Activated CD4-positive, alpha-beta T cell treated with anti-CD3 and anti-CD28 coated beads for 36 hours (primary cell): ENCODE measurements at regions of chr20 and their contacts with region 1.

Region 1: DNA sequence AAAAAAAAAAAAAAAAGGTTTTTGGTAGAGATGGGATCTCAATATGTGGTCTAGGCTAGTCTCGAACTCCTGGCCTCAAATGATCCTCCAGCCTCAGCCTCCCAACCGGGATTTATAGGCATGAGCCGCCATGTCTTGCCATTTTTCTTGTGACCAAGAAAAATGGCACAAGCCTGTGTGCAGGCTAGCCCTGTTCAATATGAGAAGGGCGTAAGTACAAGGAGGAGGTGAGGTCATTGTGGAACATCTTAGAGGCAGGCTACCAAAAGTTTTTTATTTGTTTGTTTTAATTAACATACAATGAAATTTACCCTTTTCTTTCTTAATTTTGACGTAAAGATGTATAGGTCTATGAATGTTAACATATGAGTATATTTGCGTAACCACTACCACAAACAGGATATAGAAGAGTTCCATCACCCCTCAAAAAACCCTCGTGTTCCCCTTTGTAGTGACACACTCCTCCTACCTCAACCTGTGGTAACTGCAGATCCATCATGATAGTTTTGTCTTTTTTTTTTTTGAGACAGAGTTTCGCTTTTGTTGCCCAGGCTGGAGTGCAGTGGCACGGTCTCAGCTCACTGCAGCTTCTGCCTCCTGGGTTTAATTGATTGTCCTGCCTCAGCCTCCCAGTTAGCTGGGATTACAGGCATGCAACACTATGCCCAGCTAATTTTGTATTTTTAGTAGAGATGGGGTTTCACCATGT is 28.3 kb upstream of the KIF3B start:
- DNase-seq: peak; percentile 60
- ATAC-seq: peak; percentile 67
- H3K4me3 Mint-ChIP-seq: peak overlapping the region; percentile 28
- H3K27ac Mint-ChIP-seq: peak overlapping the region; percentile 84
- H3K4me1 Mint-ChIP-seq: peaks cover 75% of the 10 kb centered on the region
- H3K27me3 Mint-ChIP-seq: no peaks in the 10 kb centered on the region

Region 2: DNA sequence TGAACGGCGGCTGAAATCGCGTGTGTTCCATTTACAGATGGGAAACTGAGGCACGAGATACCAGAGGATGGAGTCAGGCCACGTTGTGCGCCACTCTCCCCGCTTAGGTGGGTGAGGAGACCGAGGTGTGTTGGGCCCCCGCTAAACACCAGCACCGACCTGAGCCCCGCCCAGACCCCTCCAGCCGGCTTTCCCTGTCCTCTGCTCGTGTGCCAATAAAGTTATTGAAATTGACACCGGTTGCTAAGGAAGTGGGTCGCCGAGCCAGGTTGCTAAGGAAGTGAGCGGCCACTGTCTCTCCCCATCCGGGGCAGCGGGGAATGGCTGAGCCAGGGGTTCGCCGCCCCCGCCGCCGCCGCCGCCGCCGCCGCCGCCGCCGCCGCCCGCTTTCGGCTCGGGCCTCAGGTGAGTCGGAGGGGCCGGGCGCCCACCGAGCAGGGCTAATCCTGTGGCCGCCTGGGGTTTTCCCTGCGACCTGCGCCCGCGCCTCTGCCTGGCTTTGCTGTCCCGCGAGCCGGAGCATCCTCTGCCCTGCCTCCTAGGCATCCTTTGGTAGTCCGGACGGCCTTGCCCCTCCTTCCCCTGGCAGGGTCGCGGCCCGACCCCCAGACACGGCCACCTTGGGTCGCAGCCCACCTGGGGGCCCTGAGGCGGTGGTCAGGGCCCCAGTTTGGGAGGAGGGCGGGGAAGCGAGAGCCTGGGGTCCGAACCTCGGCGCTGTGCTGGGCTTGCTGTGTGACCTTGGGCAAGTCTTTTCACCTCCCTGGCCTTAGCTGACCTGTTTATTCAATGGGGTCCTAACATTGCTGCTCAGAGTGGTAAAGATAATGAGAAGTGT is 28.4 kb after region 1 on chr20 and contains the start of gene KIF3B:
- CTCF ChIA-PET with region 1: no interaction called
- POLR2A ChIA-PET with region 1: interaction called, 3 read pairs
- intact Hi-C with region 1: loop called (anchors 1 kb)
- DNase-seq: peak; percentile 93
- ATAC-seq: peak; percentile 81
- H3K4me3 Mint-ChIP-seq: peak within 1 kb of the TSS; percentile 91
- H3K27ac Mint-ChIP-seq: peak within 1 kb of the TSS; percentile 98
- H3K4me1 Mint-ChIP-seq: peaks cover 58% of the 10 kb centered on the region
- H3K27me3 Mint-ChIP-seq: no peaks in the 10 kb centered on the region
- total RNA-seq, gene KIF3B: 39.9 to 40.7 TPM

Region 3: DNA sequence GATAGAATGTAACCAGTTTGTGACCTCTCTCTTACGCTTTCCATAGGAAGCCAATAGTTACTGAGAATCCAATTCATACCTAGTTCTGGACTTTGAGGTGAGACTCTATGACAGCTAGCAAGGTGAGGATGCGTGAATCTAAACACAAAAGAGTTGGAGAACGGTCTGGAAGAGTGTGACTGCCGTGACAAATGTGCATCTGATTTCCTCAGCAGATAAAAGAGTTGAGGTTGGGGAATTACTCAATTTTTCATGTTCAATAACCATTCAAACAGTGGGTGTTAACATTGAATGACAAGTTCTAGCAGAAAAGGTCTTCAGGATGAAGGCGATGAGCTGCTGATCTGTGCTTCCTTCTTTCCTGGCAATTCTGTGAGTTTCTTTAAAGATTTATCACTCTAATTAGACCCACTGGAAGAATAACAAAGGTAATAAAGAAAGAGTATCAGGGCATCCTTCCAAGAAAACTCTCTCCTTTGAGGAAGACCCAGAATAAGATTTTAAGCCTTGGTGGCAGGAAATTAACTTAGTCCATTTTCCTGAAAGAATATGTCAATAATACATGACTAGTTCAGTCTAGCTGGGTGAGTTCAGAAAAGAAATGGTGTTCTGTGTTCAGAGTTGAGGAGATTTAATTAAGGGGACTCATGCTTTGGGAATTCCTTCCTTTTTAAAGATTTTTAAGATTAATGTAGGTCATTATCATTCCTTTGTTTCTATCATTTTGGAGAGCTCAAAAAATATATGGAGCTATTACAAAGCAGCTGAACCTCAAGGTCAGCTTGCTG is 52.7 kb after region 1 on chr20:
- CTCF ChIA-PET with region 1: no interaction called
- POLR2A ChIA-PET with region 1: no interaction called
- intact Hi-C with region 1: loop called in 1 of 2 experiments (anchors 1 kb)
- DNase-seq: no peak
- ATAC-seq: peak; percentile 68
- H3K4me3 Mint-ChIP-seq: peak overlapping the region; percentile 42
- H3K27ac Mint-ChIP-seq: peak overlapping the region; percentile 82
- H3K4me1 Mint-ChIP-seq: peaks cover 52% of the 10 kb centered on the region
- H3K27me3 Mint-ChIP-seq: no peaks in the 10 kb centered on the region

Region 4: DNA sequence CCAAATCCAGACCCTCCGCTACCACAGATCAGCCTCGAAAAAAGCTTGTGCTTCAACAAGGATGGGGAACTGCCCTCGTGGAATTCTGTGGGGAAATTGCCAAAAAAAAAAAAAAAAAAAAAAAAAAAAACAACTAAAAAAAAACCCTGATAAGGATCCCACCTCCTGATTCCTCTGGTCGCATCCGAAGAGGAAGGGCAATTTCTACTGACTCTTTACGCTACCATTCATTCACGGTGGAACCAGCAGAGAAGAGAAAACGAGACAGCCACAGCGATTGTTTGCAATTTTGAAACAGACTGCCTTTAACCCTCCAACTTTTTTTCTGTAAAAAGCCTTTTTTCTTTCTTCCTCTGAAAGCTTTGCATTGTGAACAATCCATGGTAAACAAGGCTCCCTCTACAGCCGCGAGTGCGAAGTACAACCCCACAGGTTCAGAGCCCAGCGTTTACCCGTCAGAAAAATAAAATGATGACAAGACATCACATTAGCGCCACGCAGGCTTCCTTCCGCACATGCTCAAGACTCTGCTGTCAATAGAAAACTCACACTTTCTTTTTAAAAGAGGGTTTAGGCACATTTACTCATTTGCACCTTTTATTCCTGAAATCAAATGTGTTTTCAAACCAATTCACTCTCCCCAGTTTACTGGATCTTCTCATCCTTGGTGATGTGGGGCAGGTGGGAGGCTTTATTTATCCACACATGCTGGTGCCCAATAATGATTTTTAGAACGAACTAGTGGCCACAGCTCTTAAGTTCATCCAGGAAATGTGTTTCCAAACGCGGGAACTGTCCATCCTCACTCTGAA is 236.0 kb after region 1 on chr20:
- CTCF ChIA-PET with region 1: no interaction called
- POLR2A ChIA-PET with region 1: no interaction called
- intact Hi-C with region 1: loop called in 1 of 2 experiments (anchors 2 kb)
- DNase-seq: peak; percentile 90
- ATAC-seq: peak; percentile 85
- H3K4me3 Mint-ChIP-seq: peak overlapping the region; percentile 80
- H3K27ac Mint-ChIP-seq: peak overlapping the region; percentile 91
- H3K4me1 Mint-ChIP-seq: peaks cover 34% of the 10 kb centered on the region
- H3K27me3 Mint-ChIP-seq: no peaks in the 10 kb centered on the region

Region 5: DNA sequence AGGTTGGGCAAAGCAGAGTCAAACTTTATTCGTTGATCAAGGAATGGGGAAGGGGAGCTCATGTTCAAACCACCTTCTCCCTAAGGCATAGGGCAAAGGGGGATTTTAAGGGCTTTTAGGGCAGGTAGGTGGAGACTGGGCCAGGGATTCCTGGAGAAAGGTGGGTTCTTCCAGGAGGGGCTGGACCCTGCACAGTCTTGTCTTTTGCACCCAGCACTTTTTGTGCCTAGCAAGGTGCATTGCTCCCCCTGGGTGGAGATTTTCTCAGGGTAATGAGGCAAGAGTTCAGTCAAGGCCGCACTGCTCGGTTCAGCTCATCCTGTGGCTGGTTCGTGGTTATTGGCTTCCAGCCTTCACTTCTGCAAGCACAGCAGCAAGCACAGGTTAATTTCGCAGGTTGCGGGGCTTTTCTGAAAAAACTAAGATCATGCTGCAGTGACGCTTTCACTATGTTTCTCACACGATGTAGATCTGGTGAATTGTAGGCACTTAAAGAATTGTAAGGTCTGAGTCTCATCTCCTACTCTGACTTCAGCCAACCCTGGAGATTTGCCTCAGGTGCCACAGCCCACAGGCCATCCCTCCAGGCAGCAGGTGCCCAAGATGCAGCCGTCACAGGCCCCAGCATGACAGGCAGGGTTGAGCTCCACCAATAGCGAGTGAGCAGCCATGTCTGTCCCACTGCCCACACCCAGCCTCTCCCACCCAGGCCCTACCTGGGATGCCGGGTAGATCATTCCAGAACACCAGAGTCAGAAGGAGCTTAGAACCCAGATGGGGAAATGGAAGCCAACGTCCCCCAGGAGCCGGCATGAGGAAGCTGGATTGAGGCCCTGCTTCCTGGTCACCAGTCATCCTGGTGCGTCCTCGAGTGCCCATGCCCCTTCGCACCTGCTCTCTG is 717.9 kb after region 1 on chr20:
- CTCF ChIA-PET with region 1: no interaction called
- POLR2A ChIA-PET with region 1: no interaction called
- intact Hi-C with region 1: loop called in 1 of 2 experiments (anchors 10 kb)
- DNase-seq: peak; percentile 79
- ATAC-seq: peak; percentile 29
- H3K4me3 Mint-ChIP-seq: peak overlapping the region; percentile 53
- H3K27ac Mint-ChIP-seq: no peak overlapping the region
- H3K4me1 Mint-ChIP-seq: peaks cover 14% of the 10 kb centered on the region
- H3K27me3 Mint-ChIP-seq: no peaks in the 10 kb centered on the region